IMR-90 (cell line): ENCODE measurements at regions of chr1 and their contacts with region 1.

Region 1: DNA sequence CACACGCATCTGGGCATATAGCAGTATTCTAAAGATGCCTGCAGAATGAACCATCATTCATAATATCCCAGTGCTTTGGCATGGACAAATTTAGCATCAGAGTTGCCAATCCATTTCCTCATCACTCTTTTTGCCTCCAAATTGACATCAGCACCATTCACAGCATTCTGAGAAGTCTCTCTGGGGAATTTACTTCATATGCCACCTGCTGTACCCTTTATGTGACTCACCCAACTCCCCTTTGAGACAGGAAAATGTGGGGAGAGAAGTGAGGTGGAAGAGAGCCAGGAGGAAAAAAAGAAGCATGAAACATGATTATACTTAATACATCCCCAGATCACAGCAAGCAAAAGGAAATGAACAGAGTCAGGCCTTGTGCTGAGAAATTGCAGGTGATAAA is 37.4 kb downstream of the RAB3B start:
- DNase-seq: no peak
- ATAC-seq: no peak
- H3K4me3 ChIP-seq: no peak overlapping the region
- H3K27ac ChIP-seq: no peak overlapping the region
- H3K4me1 ChIP-seq: peaks cover 27% of the 10 kb centered on the region
- H3K27me3 ChIP-seq: no peaks in the 10 kb centered on the region
- CTCF ChIP-seq: no peak
- POLR2A ChIP-seq: no peak
- RAD21 ChIP-seq: no peak

Region 2: DNA sequence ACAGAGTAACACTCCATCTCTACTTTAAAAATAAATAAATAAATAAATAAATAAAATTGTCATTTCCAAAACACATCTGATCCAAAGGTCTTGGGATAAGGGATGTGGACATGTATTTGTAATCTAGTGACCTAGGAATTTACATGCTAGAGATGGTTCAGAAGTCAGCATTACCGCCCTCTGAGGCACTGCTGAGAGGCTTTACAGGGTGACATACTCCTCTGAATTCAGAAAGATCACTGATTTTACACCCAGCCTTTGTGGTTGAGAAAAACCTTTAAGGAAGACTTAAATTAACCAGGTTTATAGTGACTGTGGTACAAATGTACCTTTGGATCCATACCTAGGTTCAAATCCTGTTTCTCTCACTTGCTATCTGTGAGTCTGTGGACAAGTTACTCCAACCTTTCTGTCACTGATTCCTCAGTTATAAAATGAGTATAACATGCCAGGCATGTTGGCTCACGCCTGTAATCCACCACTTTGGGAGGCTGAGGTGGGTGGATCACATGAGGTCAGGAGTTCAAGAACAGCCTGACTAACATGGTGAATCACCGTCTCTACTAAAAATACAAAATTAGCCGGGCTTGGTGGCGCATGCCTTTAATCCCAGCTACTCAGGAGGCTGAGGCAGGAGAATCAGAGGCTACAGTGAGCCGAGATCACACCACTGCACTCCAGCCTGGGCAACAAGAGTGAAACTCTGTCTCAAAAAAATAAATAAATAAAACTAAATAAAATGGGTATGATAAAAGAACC is 316.1 kb before region 1 on chr1:
- CTCF ChIA-PET with region 1: no interaction called
- POLR2A ChIA-PET with region 1: no interaction called
- dilution Hi-C with region 1: no loop called
- in situ Hi-C with region 1: no loop called
- intact Hi-C with region 1: no loop called
- DNase-seq: peak; percentile 91
- ATAC-seq: peak; percentile 97
- H3K4me3 ChIP-seq: no peak overlapping the region
- H3K27ac ChIP-seq: no peak overlapping the region; the same call in none of the 2 replicates
- H3K4me1 ChIP-seq: peaks cover 9% of the 10 kb centered on the region; the same call in 1 of the 2 replicates
- H3K27me3 ChIP-seq: no peaks in the 10 kb centered on the region
- CTCF ChIP-seq: no peak
- POLR2A ChIP-seq: peak; percentile 16; the same call in 1 of the 2 replicates
- RAD21 ChIP-seq: peak; percentile 30

Region 3: GRCh38 chr1:51906306-51907078 is 46.6 kb before region 1 on chr1:
- CTCF ChIA-PET with region 1: no interaction called
- POLR2A ChIA-PET with region 1: no interaction called
- dilution Hi-C with region 1: no loop called
- in situ Hi-C with region 1: no loop called
- intact Hi-C with region 1: loop called (anchors 5 kb)
- DNase-seq: peak; percentile 82
- ATAC-seq: peak; percentile 73
- H3K4me3 ChIP-seq: no peak overlapping the region
- H3K27ac ChIP-seq: no peak overlapping the region
- H3K4me1 ChIP-seq: peaks cover 13% of the 10 kb centered on the region
- H3K27me3 ChIP-seq: no peaks in the 10 kb centered on the region
- CTCF ChIP-seq: no peak
- POLR2A ChIP-seq: no peak
- RAD21 ChIP-seq: no peak